GM12878 (cell line): ENCODE measurements at regions of chr11 and their contacts with region 1.

Region 1: DNA sequence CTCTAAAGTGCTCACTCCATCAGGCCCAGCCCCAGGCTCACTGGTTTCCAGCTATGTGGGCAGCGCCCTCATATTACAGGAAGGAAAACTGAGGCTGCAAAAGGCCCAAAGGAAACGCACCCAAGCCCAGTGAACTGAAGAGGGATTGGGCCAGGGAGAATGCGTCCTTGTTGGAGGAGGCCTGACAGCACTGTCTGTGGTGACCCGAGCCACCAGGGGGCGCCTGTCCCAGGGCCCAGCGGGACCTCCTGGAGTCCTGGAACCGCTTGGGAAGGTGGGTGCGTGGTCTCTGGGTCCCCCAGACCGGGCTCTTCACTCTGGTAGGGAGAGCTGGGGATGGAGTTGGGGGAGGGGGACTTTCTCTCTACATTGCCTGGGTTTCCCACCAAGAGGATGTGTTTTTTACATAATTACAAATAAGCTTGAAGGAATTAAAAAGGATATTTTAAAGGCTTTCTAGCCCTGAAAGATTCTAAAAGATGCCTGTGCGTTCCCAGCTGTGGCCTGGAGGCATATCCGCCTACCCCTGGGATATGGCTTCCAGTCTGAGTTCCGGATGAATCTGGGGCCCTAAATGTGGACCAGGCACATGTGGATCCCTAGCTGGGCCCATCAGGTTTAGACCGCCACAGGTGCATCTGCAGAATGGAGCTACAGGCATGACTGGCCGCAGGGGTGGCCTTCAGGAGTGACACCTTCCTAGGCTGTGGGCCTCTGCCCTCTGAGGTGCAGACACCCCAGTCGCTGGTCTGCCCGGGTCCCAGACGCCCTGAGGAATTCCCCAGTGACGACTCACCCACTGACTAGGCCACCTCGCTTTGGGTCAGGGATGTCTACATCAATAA is 4.2 kb downstream of the SPI1 start:
- DNase-seq: no peak
- ATAC-seq: peak; percentile 57
- H3K4me3 ChIP-seq: no peak overlapping the region
- H3K27ac ChIP-seq: peak overlapping the region; percentile 20; the same call in 1 of the 2 replicates
- H3K4me1 ChIP-seq: peaks cover 18% of the 10 kb centered on the region
- H3K27me3 ChIP-seq: no peaks in the 10 kb centered on the region
- CTCF ChIP-seq: peak; percentile 86 to 96 (median 94)
- EP300 ChIP-seq: no peak
- POLR2A ChIP-seq: peak; percentile 19; the same call in 1 of the 2 replicates
- RAD21 ChIP-seq: peak; percentile 73

Region 2: DNA sequence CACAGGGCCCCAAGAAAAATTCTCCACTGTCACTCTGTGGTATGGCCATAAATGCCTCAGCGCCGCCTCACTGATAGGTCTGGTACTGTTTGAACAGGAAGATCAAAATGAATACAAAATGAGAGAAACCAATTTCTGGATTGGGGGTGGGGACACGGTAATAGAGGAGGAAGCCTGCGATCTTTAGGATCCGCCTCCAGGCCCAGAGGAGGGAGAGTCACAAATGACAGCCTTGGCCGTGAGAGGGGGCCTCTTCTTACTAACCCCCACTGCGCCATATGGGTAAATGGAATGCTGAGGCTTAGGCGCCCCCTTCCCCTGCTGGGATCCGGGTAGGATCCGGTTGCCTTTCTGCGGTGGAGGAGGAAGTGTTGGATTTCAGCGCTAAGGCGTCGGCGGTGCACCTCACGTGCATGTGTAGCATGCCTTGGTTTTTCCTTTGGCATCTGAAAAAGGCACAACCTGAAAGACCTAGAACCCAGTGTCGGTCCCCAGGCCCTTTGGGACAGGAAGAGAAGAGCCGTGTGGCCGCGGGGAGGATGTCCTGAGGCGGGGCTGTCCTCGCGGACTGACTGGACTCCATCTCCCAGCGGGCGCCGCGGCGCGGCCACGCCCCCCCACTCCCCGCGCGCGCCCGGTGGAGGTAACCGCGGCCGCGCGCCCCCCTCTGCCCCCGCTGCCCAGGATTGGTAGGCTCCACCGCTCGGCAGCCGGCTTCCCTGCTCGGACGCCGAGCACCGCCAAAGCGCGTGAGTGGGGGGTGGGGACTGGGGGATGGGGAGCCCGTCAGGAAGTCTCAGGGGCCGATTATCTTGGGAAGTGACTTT is 104.9 kb before region 1 on chr11:
- CTCF ChIA-PET with region 1: interaction called, 18 read pairs
- POLR2A ChIA-PET with region 1: no interaction called
- RAD21 ChIA-PET with region 1: interaction called, 3 read pairs
- SMC1A ChIA-PET with region 1: interaction called, 5 read pairs
- in situ Hi-C with region 1: no loop called
- intact Hi-C with region 1: no loop called
- DNase-seq: no peak
- ATAC-seq: peak; percentile 77
- H3K4me3 ChIP-seq: peak overlapping the region; percentile 78
- H3K27ac ChIP-seq: peak overlapping the region; percentile 79
- H3K4me1 ChIP-seq: peaks cover 23% of the 10 kb centered on the region
- H3K27me3 ChIP-seq: no peaks in the 10 kb centered on the region
- CTCF ChIP-seq: 0 out of 6 replicates have a peak, but pooled peaks of 1 of the 3 experiments have one; percentile 20
- EP300 ChIP-seq: 0 out of 4 replicates have a peak, but pooled peaks of 1 of the 2 experiments have one; percentile 18
- POLR2A ChIP-seq: peak; percentile 14
- RAD21 ChIP-seq: no peak

Region 3: GRCh38 chr11:47359586-47359985 is 14.5 kb before region 1 on chr11:
- CTCF ChIA-PET with region 1: interaction called, 15 read pairs
- POLR2A ChIA-PET with region 1: no interaction called
- RAD21 ChIA-PET with region 1: no interaction called
- SMC1A ChIA-PET with region 1: interaction called, 3 read pairs
- in situ Hi-C with region 1: no loop called
- intact Hi-C with region 1: no loop called
- DNase-seq: no peak
- ATAC-seq: no peak
- H3K4me3 ChIP-seq: no peak overlapping the region
- H3K27ac ChIP-seq: no peak overlapping the region
- H3K4me1 ChIP-seq: no peaks in the 10 kb centered on the region
- H3K27me3 ChIP-seq: no peaks in the 10 kb centered on the region
- CTCF ChIP-seq: no peak
- EP300 ChIP-seq: no peak
- POLR2A ChIP-seq: no peak
- RAD21 ChIP-seq: no peak

Region 4: GRCh38 chr11:47394322-47395222 is 20.5 kb after region 1 on chr11:
- CTCF ChIA-PET with region 1: interaction called, 73 read pairs
- POLR2A ChIA-PET with region 1: interaction called, 94 read pairs
- RAD21 ChIA-PET with region 1: interaction called, 31 read pairs
- SMC1A ChIA-PET with region 1: interaction called, 36 read pairs
- in situ Hi-C with region 1: no loop called
- intact Hi-C with region 1: no loop called
- DNase-seq: no peak
- ATAC-seq: peak; percentile 73
- H3K4me3 ChIP-seq: peak overlapping the region; percentile 25; the same call in 1 of the 2 replicates
- H3K27ac ChIP-seq: peak overlapping the region; percentile 93
- H3K4me1 ChIP-seq: peaks cover 51% of the 10 kb centered on the region
- H3K27me3 ChIP-seq: no peaks in the 10 kb centered on the region
- CTCF ChIP-seq: no peak
- EP300 ChIP-seq: no peak
- POLR2A ChIP-seq: peak; percentile 86
- RAD21 ChIP-seq: no peak

Region 5: DNA sequence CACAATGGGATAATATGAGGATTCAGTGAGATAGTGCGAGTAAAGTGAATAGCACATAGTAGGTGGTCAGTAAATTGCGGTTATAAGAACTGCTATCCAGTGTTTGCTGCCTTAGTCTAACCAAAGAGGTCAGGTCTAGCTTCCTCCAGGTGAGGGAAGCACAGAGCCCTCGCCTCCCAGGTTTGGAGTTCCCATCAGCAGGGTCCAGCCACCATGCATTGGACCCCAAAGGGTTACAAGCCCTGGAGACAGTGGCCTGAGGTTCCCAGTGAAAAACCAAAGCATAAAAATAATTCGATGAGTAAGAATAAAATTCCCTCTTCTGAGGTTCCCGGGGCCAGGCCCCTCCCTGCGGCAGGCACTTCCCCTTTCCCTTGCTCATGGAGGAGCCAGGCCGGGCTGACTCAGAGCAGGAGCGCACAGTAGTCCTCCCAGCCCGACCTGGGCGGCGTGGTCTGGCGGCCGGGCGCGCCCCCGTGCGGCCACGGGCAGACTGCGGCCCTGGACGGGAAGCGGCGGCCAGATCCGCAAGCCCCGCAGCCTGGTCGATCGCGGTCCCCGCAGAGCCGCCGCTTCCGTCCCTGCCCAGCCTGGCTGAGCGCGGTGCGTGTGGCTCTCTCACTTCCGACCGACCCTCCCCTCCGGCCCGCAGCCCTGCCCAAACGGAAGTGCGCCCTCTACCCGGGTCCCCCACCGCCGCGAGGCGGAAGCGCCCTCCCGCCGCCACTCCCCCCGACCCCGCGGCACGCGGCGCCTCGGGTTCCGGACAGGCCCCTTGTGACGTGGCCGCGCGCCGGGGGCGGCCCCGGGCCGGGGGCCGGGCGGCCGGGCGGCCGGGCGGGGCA is 33.9 kb after region 1 on chr11 and contains the start of gene SLC39A13:
- CTCF ChIA-PET with region 1: interaction called, 161 read pairs
- POLR2A ChIA-PET with region 1: interaction called, 13 read pairs
- RAD21 ChIA-PET with region 1: interaction called, 24 read pairs
- SMC1A ChIA-PET with region 1: interaction called, 35 read pairs
- in situ Hi-C with region 1: loop called (anchors 5 kb)
- intact Hi-C with region 1: loop called (anchors 1 kb)
- DNase-seq: peak; percentile 79
- ATAC-seq: peak; percentile 92
- H3K4me3 ChIP-seq: peak within 1 kb of the TSS; percentile 93
- H3K27ac ChIP-seq: peak within 1 kb of the TSS; percentile 95
- H3K4me1 ChIP-seq: peaks cover 17% of the 10 kb centered on the region
- H3K27me3 ChIP-seq: no peaks in the 10 kb centered on the region
- CTCF ChIP-seq: peak; percentile 71 to 96 (median 79); a peak in 4 of 6 replicates
- EP300 ChIP-seq: peak in 1 of 2 experiments; percentile 83; a peak in 2 of 4 replicates
- POLR2A ChIP-seq: peak; percentile 88
- RAD21 ChIP-seq: peak; percentile 87
- polyA plus RNA-seq, gene SLC39A13: 0.23 to 0.60 TPM

Region 6: DNA sequence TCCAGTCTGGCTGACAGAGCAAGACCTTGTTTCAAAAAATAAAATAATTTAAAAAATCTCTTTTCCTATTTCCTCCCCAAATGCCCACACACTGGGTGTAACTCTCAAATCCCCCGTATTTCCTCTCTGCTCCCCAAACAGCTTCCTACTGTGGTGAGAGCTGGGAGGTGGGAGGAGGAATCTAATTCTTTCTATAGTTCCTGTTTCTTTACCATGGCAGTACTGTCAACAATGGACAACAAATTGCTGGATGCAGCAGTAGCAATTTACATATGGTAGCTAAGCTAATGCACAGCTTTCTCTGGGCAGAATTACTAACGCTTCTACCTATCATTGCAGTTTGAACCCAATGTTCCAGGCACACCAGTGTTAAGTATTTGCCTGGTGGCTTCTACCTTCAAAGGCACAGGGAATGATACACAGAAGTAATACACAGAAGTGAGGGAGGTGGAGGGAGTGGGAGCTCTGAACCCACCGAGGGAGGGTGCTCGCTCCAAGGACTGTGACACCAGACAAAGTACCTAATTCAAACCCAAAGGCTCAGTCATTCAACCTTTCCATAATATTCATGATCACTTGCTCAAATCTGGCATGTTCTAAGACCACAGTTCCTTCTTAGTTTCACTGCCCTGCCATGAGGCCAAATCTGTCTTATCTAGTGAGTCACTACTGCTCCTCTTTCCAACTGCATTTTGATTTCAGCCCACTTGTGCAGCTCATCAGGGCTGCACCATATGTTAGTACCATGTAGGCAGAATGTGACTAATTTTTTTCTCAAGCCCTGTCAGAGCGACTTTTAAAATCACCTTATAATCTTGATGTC is 140.9 kb after region 1 on chr11:
- CTCF ChIA-PET with region 1: interaction called, 10 read pairs
- POLR2A ChIA-PET with region 1: interaction called, 3 read pairs
- RAD21 ChIA-PET with region 1: no interaction called
- SMC1A ChIA-PET with region 1: no interaction called
- in situ Hi-C with region 1: no loop called
- intact Hi-C with region 1: no loop called
- DNase-seq: no peak
- ATAC-seq: peak; percentile 69
- H3K4me3 ChIP-seq: peak overlapping the region; percentile 12; the same call in 1 of the 2 replicates
- H3K27ac ChIP-seq: peak overlapping the region; percentile 62
- H3K4me1 ChIP-seq: peaks cover 71% of the 10 kb centered on the region
- H3K27me3 ChIP-seq: no peaks in the 10 kb centered on the region
- CTCF ChIP-seq: no peak
- EP300 ChIP-seq: no peak
- POLR2A ChIP-seq: no peak
- RAD21 ChIP-seq: no peak

Region 7: GRCh38 chr11:47558695-47559094 is 184.6 kb after region 1 on chr11:
- CTCF ChIA-PET with region 1: no interaction called
- POLR2A ChIA-PET with region 1: no interaction called
- RAD21 ChIA-PET with region 1: no interaction called
- SMC1A ChIA-PET with region 1: no interaction called
- in situ Hi-C with region 1: no loop called
- intact Hi-C with region 1: no loop called
- DNase-seq: no peak
- ATAC-seq: no peak
- H3K4me3 ChIP-seq: no peak overlapping the region
- H3K27ac ChIP-seq: no peak overlapping the region
- H3K4me1 ChIP-seq: no peaks in the 10 kb centered on the region
- H3K27me3 ChIP-seq: no peaks in the 10 kb centered on the region
- CTCF ChIP-seq: no peak
- EP300 ChIP-seq: no peak
- POLR2A ChIP-seq: no peak
- RAD21 ChIP-seq: no peak

Region 8: GRCh38 chr11:47858169-47858543 is 484.1 kb after region 1 on chr11:
- CTCF ChIA-PET with region 1: interaction called, 5 read pairs
- POLR2A ChIA-PET with region 1: no interaction called
- RAD21 ChIA-PET with region 1: no interaction called
- SMC1A ChIA-PET with region 1: no interaction called
- in situ Hi-C with region 1: no loop called
- intact Hi-C with region 1: loop called (anchors 10 kb)
- DNase-seq: no peak
- ATAC-seq: no peak
- H3K4me3 ChIP-seq: no peak overlapping the region
- H3K27ac ChIP-seq: peak overlapping the region; percentile 41; the same call in 1 of the 2 replicates
- H3K4me1 ChIP-seq: peaks cover 66% of the 10 kb centered on the region
- H3K27me3 ChIP-seq: no peaks in the 10 kb centered on the region
- CTCF ChIP-seq: no peak
- EP300 ChIP-seq: no peak
- POLR2A ChIP-seq: no peak
- RAD21 ChIP-seq: no peak